PC-3 (cell line): ENCODE measurements at regions of chrX and their contacts with region 1.

Region 1: DNA sequence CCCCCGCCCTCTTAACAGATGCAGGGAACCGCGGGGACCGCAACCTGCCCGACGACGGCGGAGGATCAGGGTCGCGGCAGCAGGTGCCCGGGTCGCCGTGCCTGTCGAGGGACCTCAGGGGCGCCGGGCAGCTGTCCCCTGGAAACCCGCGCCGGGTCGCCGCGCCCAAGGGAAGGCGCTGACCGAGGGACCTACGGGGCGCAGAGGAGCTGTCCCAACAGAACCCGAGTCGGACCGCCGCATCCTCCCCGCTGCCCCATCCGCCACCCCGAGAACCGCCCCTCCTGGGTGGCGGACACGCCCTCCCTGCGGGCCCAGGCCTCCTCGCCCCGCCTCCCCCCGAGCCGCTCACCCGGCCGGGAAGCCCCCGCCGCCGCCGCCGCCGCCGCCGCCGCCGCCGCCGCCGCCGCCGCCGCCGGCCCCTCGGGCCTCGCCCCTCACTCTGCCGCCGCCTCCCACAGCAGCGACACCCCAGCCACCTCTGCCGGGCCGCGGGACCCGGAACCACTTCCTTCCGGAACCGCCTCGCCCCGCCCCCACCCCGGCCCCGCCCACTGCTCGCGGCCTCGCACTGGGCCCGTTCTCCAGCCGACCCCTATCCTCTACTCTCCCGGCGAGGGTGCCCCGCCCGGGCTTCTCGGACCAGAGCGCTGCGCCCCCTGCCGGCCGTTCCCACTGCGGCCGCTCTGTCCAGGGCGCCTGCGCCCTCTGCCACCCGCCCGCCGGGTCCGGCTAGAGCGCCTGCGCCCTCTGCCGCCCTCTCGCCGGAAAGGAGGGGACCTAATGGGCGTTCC is at the start of gene BCLAF3:
- DNase-seq: peak; percentile 94
- ATAC-seq: peak; percentile 98
- H3K4me3 ChIP-seq: peak within 1 kb of the TSS; percentile 79
- H3K27ac ChIP-seq: no peak within 1 kb of the TSS
- H3K4me1 ChIP-seq: no peaks in the 10 kb centered on the region
- H3K27me3 ChIP-seq: no peaks in the 10 kb centered on the region
- CTCF ChIP-seq: peak; percentile 75
- total RNA-seq, gene BCLAF3: 5.4 and 6.9 TPM in 2 replicates

Region 2: DNA sequence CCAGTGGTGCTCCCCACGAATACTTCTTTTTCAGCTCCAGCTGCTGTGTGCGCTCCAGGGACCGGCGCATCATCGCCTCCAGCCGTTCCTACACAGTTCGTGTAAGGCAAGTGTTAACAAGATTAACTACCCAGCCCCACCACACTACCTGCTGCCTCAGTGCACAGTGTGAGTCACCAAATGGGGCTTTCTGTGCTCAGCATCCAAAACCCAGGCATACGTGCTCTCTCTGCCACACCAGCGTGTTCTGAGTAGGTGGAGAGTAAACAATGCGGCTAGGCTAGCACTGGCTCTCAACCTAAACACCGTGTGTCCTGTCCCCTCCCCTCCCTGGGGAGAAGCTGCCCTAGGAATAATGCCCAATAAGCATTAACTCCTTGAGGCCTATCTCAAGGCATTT is 66.0 kb after region 1 on chrX:
- CTCF ChIA-PET with region 1: no interaction called
- POLR2A ChIA-PET with region 1: no interaction called
- intact Hi-C with region 1: loop called (anchors 2 kb)
- DNase-seq: peak; percentile 87
- ATAC-seq: peak; percentile 97
- H3K4me3 ChIP-seq: peak overlapping the region; percentile 50; the same call in 1 of the 2 replicates
- H3K27ac ChIP-seq: no peak overlapping the region
- H3K4me1 ChIP-seq: peaks cover 32% of the 10 kb centered on the region
- H3K27me3 ChIP-seq: no peaks in the 10 kb centered on the region
- CTCF ChIP-seq: no peak

Region 3: GRCh38 chrX:20066968-20067708 is 76.4 kb after region 1 on chrX:
- CTCF ChIA-PET with region 1: no interaction called
- POLR2A ChIA-PET with region 1: no interaction called
- intact Hi-C with region 1: loop called (anchors 1 kb)
- DNase-seq: peak; percentile 73
- ATAC-seq: peak; percentile 77
- H3K4me3 ChIP-seq: peak overlapping the region; percentile 33; the same call in 1 of the 2 replicates
- H3K27ac ChIP-seq: no peak overlapping the region
- H3K4me1 ChIP-seq: peaks cover 13% of the 10 kb centered on the region
- H3K27me3 ChIP-seq: no peaks in the 10 kb centered on the region
- CTCF ChIP-seq: peak; percentile 85